HepG2 (cell line): ENCODE measurements at regions of chr7 and their contacts with region 1.

Region 1: DNA sequence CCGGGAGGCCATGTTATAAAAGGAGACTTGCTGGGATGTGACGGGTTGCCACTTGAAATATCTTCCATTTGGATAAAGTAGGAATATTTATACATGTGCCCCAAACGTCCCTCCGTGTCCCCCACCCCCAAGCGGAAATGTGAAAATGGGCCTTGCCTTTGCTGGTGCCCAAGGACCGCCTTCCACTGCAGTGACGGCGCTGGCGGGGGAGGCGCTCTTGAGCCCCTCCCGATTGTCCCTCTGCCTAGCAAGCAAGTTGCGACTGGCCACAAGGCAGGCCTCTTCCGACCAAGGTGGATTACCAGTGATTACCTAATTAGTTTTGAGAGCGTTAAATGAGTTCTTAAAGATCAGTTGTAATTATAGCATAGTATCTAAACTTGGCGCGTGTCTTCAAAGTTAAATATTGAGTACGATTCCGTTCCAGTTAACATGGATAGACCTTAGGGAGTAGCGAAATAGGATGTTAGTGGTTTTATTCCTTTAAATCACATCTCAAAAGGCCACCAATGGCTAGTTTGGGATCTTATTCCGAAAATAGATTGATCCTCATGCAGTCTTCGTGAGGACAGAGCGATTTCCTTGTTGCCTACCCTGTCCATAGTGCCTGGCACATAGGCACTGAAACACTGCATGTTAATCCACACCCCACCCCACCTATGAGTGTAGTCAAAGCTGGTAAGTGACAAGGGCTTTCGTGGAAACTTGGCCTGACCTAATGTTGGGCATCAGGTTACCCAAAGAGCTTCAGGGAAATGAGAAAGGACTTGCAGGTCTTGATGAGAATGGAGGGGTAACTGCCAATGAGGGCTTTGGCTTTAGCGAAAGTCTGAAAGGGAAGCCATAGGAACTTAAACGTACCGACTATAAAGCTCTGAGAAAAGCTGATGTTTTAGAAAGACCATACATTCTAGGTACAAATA is 1.1 kb downstream of the PPIA start:
- DNase-seq: peak; percentile 79
- ATAC-seq: peak; percentile 68
- H3K4me3 ChIP-seq: peak overlapping the region; percentile 80 to 86 (median 85)
- H3K27ac ChIP-seq: peak overlapping the region; percentile 96
- H3K4me1 ChIP-seq: peaks cover 37% of the 10 kb centered on the region
- H3K27me3 ChIP-seq: no peaks in the 10 kb centered on the region; a peak in 1 of 5 replicates
- CTCF ChIP-seq: peak; percentile 83
- EP300 ChIP-seq: no peak
- POLR2A ChIP-seq: peak; percentile 15 to 89; a peak in 3 of 4 replicates
- RAD21 ChIP-seq: peak; percentile 9; the same call in 1 of the 2 replicates

Region 2: GRCh38 chr7:44587843-44588711 is 209.5 kb before region 1 on chr7:
- CTCF ChIA-PET with region 1: no interaction called
- POLR2A ChIA-PET with region 1: no interaction called
- in situ Hi-C with region 1: no loop called
- intact Hi-C with region 1: loop called (anchors 5 kb)
- DNase-seq: peak; percentile 55
- ATAC-seq: peak; percentile 74
- H3K4me3 ChIP-seq: no peak overlapping the region
- H3K27ac ChIP-seq: no peak overlapping the region
- H3K4me1 ChIP-seq: peaks cover 8% of the 10 kb centered on the region
- H3K27me3 ChIP-seq: peaks cover 0 to 11% of the 10 kb centered on the region in 2 experiments; a peak in 1 of 5 replicates
- CTCF ChIP-seq: peak; percentile 76
- EP300 ChIP-seq: no peak
- POLR2A ChIP-seq: no peak
- RAD21 ChIP-seq: 0 out of 2 replicates have a peak, but pooled peaks have one; percentile 25

Region 3: DNA sequence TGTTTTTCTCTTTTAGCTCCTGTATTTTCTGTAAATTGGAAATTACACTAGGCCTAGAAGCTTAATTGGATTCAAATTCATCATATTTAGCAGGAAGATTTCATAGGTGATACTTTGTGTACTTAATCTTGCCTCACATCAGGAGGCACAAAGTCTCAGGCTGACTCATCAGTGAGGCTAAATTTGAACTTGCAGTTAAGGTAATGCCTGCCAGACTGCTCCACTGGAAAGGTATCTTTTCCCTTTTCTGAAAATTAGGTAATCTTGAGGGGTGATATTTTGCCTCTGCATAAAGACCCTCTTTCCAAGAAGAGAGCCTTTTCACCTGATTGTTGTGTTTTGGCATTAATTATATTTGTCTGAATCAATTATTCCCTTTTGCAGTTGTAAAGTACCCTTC is 13.5 kb after region 1 on chr7:
- CTCF ChIA-PET with region 1: no interaction called
- POLR2A ChIA-PET with region 1: interaction called, 8 read pairs
- in situ Hi-C with region 1: no loop called
- intact Hi-C with region 1: loop called (anchors 1 kb)
- DNase-seq: peak; percentile 73
- ATAC-seq: peak; percentile 28
- H3K4me3 ChIP-seq: no peak overlapping the region; a peak in 1 of 6 replicates
- H3K27ac ChIP-seq: no peak overlapping the region
- H3K4me1 ChIP-seq: peaks cover 36% of the 10 kb centered on the region
- H3K27me3 ChIP-seq: no peaks in the 10 kb centered on the region
- CTCF ChIP-seq: no peak
- EP300 ChIP-seq: peak in 1 of 2 experiments; percentile 53; a peak in 2 of 4 replicates
- POLR2A ChIP-seq: no peak
- RAD21 ChIP-seq: no peak

Region 4: GRCh38 chr7:46569133-46569465 is 1771.5 kb after region 1 on chr7:
- CTCF ChIA-PET with region 1: no interaction called
- POLR2A ChIA-PET with region 1: no interaction called
- in situ Hi-C with region 1: no loop called
- intact Hi-C with region 1: loop called (anchors 10 kb)
- DNase-seq: peak; percentile 3
- ATAC-seq: peak; percentile 65
- H3K4me3 ChIP-seq: no peak overlapping the region
- H3K27ac ChIP-seq: no peak overlapping the region
- H3K4me1 ChIP-seq: no peaks in the 10 kb centered on the region
- H3K27me3 ChIP-seq: no peaks in the 10 kb centered on the region
- CTCF ChIP-seq: no peak
- EP300 ChIP-seq: no peak
- POLR2A ChIP-seq: no peak
- RAD21 ChIP-seq: no peak